Activated CD4-positive, alpha-beta T cell treated with anti-CD3 and anti-CD28 coated beads, Interleukin-2, amount 10 ng/mL, durations not matched to agents 24 days and 14 days (primary cell): ENCODE measurements at regions of chr7 and their contacts with region 1.

Region 1: DNA sequence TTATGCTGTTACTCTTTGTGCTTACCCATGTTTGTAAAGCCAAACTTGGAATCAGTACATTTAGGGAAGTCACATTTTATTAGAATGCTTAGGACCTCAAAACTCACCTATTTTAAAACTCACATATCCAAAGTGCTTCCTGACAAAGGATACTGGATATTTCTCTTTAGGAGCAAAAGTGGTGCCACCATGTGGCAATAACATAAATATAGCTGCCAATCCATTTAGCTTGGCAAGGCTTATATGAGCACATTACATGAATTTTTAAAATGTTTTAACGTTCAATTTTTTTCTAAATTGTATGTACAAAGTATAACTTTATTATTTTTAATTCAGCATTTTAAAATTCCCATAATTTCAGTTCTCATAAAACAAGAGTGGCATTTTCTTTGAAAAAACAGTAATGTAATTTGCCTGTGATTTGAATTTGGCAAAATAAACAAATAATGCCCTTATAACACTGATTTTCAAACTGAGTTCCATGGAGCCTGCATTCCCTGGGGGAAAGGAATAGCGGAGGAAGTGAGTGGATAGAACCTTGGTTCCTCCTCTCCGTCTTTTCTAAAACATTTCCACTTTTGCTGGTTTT is 75.4 kb downstream of the HDAC9 start:
- DNase-seq: no peak
- H3K4me3 Mint-ChIP-seq: no peak overlapping the region
- H3K27ac Mint-ChIP-seq: no peak overlapping the region
- H3K4me1 Mint-ChIP-seq: no peaks in the 10 kb centered on the region
- H3K27me3 Mint-ChIP-seq: no peaks in the 10 kb centered on the region

Region 2: DNA sequence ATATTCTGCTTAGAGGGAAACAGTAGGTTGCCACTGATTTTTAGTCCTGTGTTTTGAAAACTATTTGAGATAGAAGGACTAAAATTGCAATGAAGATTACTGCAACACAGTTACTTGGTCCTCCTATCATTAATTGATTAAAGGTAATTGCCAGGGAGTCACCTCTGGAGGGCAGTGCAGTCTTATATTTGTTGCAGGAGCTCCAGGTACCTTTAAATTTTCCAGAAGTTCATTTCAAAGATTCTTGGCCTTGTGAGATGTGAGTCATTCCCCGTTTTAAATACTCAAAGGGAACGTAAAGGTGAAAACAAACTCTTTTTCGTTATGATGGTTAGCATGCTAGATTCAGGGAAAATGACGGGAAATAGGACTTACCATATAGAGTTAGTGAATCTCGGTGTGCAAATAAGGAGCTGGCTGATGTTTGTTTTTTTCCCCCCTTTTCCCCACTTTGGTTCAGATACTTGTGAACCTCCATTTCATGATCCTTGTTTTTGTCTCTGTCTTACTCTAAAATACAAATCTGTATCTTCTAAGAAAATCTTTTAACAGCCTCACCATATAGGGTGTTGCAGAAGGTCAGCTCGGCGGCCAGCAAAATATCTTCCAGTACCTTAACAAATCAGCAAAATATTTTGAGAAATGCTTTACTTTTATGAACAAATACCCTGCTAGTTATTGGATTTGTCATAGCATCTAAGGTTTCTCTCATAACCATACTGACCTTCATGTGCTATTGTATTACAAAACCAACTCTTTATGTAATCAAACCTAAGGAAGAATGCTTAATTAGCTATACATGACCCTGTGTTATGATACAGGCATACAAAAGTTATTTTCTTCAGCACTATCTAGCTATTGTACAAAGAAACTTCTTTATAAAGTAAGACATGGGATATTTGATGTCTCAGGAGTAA is 218.4 kb before region 1 on chr7:
- intact Hi-C with region 1: loop called (anchors 10 kb)
- DNase-seq: peak; percentile 59
- H3K4me3 Mint-ChIP-seq: no peak overlapping the region
- H3K27ac Mint-ChIP-seq: no peak overlapping the region
- H3K4me1 Mint-ChIP-seq: peaks cover 3% of the 10 kb centered on the region
- H3K27me3 Mint-ChIP-seq: peaks cover 6% of the 10 kb centered on the region